ENCODE measurements at regions of chr1 and their contacts with region 1.

Region 1: GRCh38 chr1:166947398-166948043 is 27.8 kb downstream of the ILDR2 start:
- DNase-seq: peak; percentile 22
- ATAC-seq: no peak
- H3K4me3 ChIP-seq: peak overlapping the region in 3 of 5 experiments; percentile 6 to 17 (median 7)
- H3K4me3 Mint-ChIP-seq: peak overlapping the region; percentile 37
- H3K27ac ChIP-seq: no peak overlapping the region
- H3K27ac Mint-ChIP-seq: no peak overlapping the region
- H3K4me1 ChIP-seq: peaks cover 7 to 11% of the 10 kb centered on the region in 2 donors
- H3K4me1 Mint-ChIP-seq: peaks cover 14% of the 10 kb centered on the region
- H3K27me3 ChIP-seq: peaks cover 0 to 37% (median 20%) of the 10 kb centered on the region in 4 experiments
- H3K27me3 Mint-ChIP-seq: peaks cover 51% of the 10 kb centered on the region
- CTCF ChIP-seq: no peak

Region 2: GRCh38 chr1:166716620-166717019 is 230.9 kb before region 1 on chr1:
- CTCF ChIA-PET with region 1: no interaction called
- POLR2A ChIA-PET with region 1: no interaction called
- intact Hi-C with region 1: no loop called
- DNase-seq: no peak
- ATAC-seq: no peak
- H3K4me3 ChIP-seq: no peak overlapping the region
- H3K4me3 Mint-ChIP-seq: no peak overlapping the region
- H3K27ac ChIP-seq: no peak overlapping the region
- H3K27ac Mint-ChIP-seq: no peak overlapping the region
- H3K4me1 ChIP-seq: no peaks in the 10 kb centered on the region
- H3K4me1 Mint-ChIP-seq: no peaks in the 10 kb centered on the region
- H3K27me3 ChIP-seq: peaks cover 0 to 2% (median 0%) of the 10 kb centered on the region in 4 experiments
- H3K27me3 Mint-ChIP-seq: no peaks in the 10 kb centered on the region
- CTCF ChIP-seq: no peak

Region 3: DNA sequence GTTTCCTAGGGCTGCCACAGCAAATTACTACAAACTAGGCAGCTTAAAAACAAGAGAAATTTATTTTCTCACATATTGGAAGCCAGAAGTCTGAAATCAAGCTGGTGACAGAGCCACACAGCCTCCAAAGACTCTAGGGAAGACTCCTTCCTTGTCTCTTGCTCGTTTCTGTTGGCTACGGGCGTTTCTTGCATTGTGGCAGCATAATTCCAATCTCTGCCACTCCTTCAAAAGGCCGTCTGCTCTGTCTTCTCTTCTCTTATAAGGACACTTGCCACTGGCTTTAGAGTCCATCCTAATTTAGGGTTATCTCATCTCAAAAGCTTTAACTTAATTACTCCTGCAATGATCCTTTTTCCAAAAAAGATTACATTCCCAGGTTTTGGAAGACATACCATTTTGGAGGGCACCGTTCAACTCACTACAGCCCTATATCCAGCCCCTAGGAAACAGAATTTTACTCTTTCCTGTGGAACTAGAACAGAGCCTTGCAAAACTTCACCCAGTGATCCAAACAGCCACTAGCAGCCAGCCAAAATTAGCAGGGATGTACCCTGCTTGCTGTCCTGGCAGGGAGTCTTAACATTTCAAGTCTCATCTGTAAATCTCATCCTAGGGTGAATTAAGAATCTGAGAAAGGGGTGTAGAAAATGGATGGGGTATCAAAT is 155.5 kb after region 1 on chr1:
- CTCF ChIA-PET with region 1: no interaction called
- POLR2A ChIA-PET with region 1: interaction called, 10 read pairs
- intact Hi-C with region 1: no loop called
- DNase-seq: no peak
- ATAC-seq: no peak
- H3K4me3 ChIP-seq: no peak overlapping the region
- H3K4me3 Mint-ChIP-seq: no peak overlapping the region
- H3K27ac ChIP-seq: no peak overlapping the region
- H3K27ac Mint-ChIP-seq: no peak overlapping the region
- H3K4me1 ChIP-seq: peaks cover 23 to 26% of the 10 kb centered on the region in 2 donors
- H3K4me1 Mint-ChIP-seq: peaks cover 21% of the 10 kb centered on the region
- H3K27me3 ChIP-seq: peaks cover 0 to 5% (median 2%) of the 10 kb centered on the region in 4 experiments
- H3K27me3 Mint-ChIP-seq: peaks cover 10% of the 10 kb centered on the region
- CTCF ChIP-seq: no peak